ENCODE measurements at regions of chr13 and their contacts with region 1.

Region 1: DNA sequence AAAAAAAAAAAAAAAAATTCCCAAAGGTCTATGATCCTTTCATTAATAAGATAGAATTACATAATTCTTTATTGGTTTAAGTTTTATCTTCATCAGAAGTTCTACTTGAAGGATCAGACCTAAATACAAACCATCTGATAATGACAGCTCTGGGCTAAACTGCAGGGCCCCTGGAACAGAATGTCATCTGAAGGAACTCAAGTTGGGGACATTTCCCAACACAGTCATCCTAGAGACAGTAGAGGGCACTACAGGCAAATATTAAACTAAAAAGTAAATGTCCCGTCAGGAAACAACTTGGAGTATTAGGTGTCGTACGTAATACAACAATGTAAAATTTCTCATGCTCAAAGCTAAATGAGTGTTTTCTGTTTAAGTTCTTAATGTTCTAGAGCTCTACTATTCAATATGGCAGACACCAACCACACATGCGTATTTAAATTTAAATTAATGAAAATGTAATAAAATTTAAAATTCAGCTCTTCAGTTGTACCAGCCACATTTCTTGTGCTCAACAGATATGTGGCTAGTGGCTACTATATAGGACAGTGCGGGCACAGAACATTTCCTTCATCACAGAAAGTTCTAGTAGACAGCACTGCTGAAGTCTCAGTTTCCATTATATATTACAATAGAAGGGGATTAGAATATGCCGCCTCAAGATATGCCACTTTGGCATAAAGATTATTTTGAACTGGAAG is 21.8 kb upstream of the NAXD start:
- DNase-seq: no peak
- H3K4me3 ChIP-seq: no peak overlapping the region
- H3K27ac ChIP-seq: no peak overlapping the region
- H3K4me1 ChIP-seq: peaks cover 0 to 13% (median 0%) of the 10 kb centered on the region in 4 donors
- H3K27me3 ChIP-seq: no peaks in the 10 kb centered on the region
- CTCF ChIP-seq: peak; percentile 62 to 65 (median 63)
- EP300 ChIP-seq: no peak
- POLR2A ChIP-seq: no peak

Region 2: DNA sequence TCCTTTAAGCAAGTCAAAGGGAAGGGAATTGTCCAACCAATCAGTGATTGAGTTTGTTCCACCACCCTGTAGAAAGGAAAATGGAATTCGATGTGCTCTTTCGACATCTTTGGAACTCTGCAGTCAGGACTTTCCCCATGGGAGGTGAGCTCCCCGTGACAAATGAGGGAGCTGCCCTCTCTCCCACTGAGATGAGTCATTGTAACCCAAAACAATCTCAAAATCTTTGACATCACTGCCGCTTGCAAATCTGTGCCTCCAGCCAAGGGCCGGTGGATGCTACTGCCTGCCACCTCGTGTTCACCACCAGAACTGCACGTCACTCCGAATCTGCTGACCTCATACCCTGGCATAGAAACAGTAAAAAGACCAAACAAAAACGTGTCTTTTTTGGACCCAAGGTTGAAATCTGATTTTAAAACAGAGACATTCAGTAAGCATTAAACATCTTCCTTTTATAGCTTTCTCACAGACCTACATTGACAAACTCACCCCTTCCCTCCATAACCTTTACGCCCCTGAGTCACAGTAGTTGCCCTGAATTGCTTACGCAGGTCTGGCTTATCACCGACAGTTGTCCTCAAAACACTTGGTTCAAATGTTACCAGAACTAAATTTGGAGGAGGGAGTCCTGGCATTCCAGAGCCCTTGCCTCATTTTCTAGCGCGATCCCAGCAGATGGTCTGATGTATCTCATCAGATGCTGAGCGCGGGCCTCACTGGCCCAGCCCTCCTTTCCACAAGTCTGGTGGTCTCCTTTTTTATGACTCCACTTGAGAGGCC is 181.3 kb before region 1 on chr13:
- intact Hi-C with region 1: no loop called
- DNase-seq: peak; percentile 98
- H3K4me3 ChIP-seq: no peak overlapping the region
- H3K27ac ChIP-seq: peak overlapping the region; percentile 87 to 98 (median 90)
- H3K4me1 ChIP-seq: peaks cover 2 to 93% (median 90%) of the 10 kb centered on the region in 4 donors
- H3K27me3 ChIP-seq: no peaks in the 10 kb centered on the region
- CTCF ChIP-seq: peak; percentile 76 to 96 (median 89)
- EP300 ChIP-seq: peak; percentile 78 to 99 (median 86)
- POLR2A ChIP-seq: no peak

Region 3: DNA sequence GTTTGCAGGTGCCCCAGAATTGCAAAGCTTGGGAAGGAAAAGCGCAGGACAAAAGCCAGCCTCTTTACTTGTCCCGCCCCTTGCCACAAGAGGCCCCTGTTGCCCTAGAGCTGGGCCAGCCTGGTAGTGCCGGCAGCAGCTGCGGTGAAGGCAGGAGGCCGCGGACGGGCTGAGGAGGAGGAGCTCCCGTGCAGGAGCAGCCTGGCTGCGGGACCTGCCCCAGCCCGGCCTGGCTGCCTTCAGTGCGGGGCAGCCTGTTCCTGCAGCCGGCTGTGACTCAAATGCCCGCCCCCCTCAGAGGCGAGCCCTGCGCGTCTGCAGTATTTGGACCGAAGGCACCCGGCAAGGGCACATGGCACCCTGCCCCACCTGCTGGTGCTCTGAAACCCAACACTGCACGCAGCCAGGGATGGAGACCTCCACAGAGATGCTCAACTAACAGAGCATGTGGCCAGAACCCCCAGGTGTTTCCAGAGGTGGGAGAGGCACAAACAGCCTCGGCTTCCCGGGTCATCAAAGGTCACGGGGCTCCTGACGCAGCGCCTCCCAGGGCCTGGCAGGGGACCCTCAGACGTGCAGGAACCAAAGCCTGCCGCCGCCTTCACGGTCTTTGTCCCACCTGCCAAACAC is 51.4 kb after region 1 on chr13:
- intact Hi-C with region 1: loop called (anchors 5 kb)
- DNase-seq: peak; percentile 90
- H3K4me3 ChIP-seq: no peak overlapping the region
- H3K27ac ChIP-seq: peak overlapping the region in 3 of 4 donors; percentile 61 to 72 (median 66)
- H3K4me1 ChIP-seq: peaks cover 0 to 32% (median 28%) of the 10 kb centered on the region in 4 donors
- H3K27me3 ChIP-seq: no peaks in the 10 kb centered on the region
- CTCF ChIP-seq: peak in 3 of 4 experiments; percentile 22 to 48 (median 36)
- EP300 ChIP-seq: no peak
- POLR2A ChIP-seq: no peak

Region 4: GRCh38 chr13:110819203-110820014 is 225.8 kb after region 1 on chr13:
- intact Hi-C with region 1: loop called (anchors 1 kb)
- DNase-seq: peak; percentile 88
- H3K4me3 ChIP-seq: no peak overlapping the region
- H3K27ac ChIP-seq: no peak overlapping the region
- H3K4me1 ChIP-seq: peaks cover 0 to 7% (median 3%) of the 10 kb centered on the region in 4 donors
- H3K27me3 ChIP-seq: no peaks in the 10 kb centered on the region
- CTCF ChIP-seq: peak; percentile 85 to 98 (median 94)
- EP300 ChIP-seq: no peak
- POLR2A ChIP-seq: no peak

Region 5: GRCh38 chr13:111046590-111047141 is 453.1 kb after region 1 on chr13:
- intact Hi-C with region 1: loop called (anchors 10 kb)
- DNase-seq: no peak
- H3K4me3 ChIP-seq: no peak overlapping the region
- H3K27ac ChIP-seq: peak overlapping the region in 1 of 4 donors; percentile 0
- H3K4me1 ChIP-seq: peaks cover 0 to 6% (median 0%) of the 10 kb centered on the region in 4 donors
- H3K27me3 ChIP-seq: no peaks in the 10 kb centered on the region
- CTCF ChIP-seq: no peak
- EP300 ChIP-seq: no peak
- POLR2A ChIP-seq: no peak